ENCODE measurements at regions of chr3 and their contacts with region 1.

Region 1: DNA sequence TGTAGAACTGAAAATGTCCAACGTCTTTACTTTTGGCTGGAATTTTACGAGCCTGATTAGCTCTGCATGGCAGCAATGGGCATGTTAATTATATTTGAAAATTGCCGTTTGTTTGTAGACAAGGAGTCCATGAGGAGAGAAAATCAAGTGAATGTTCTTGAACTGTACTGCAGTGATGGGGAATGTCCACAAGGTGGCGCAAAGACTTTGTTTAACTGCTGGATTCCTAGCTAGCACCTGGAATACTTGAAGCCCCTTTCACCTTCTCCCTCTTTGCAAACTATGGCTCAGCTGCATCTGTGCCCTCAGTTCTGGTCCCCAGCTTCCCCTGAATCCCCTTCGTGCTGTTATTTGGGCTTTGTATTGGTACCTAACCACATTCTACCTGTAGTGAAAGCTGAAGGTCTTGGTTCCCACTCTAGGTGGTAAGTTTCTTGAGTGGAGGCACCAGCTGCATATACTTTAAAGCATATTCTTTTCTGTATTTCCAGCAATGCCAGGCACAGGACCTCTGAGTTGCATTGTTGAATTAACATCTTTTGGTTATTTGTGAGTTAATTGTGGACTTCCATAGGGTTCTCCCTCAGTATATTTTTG is 25.3 kb downstream of the EXOG start:
- DNase-seq: peak; percentile 75 to 84 (median 79)
- H3K4me3 ChIP-seq: no peak overlapping the region
- H3K27ac ChIP-seq: no peak overlapping the region
- H3K4me1 ChIP-seq: peaks cover 0 to 15% (median 1%) of the 10 kb centered on the region in 4 experiments
- H3K27me3 ChIP-seq: no peaks in the 10 kb centered on the region

Region 2: GRCh38 chr3:38383156-38383875 is 138.2 kb before region 1 on chr3:
- CTCF ChIA-PET with region 1: no interaction called
- POLR2A ChIA-PET with region 1: no interaction called
- DNase-seq: no peak
- H3K4me3 ChIP-seq: no peak overlapping the region
- H3K27ac ChIP-seq: no peak overlapping the region
- H3K4me1 ChIP-seq: no peaks in the 10 kb centered on the region
- H3K27me3 ChIP-seq: no peaks in the 10 kb centered on the region

Region 3: GRCh38 chr3:38453075-38453912 is 68.2 kb before region 1 on chr3 and contains the start of gene ACVR2B:
- CTCF ChIA-PET with region 1: no interaction called
- POLR2A ChIA-PET with region 1: no interaction called
- DNase-seq: peak; percentile 61 to 70 (median 69)
- H3K4me3 ChIP-seq: peak within 1 kb of the TSS; percentile 40 to 93 (median 77)
- H3K27ac ChIP-seq: peak within 1 kb of the TSS in 1 of 2 experiments; percentile 49
- H3K4me1 ChIP-seq: peaks cover 6 to 28% (median 22%) of the 10 kb centered on the region in 4 experiments
- H3K27me3 ChIP-seq: peaks cover 0 to 28% (median 6%) of the 10 kb centered on the region in 5 experiments

Region 4: GRCh38 chr3:38507120-38507519 is 14.4 kb before region 1 on chr3:
- CTCF ChIA-PET with region 1: interaction called, 16 read pairs
- POLR2A ChIA-PET with region 1: no interaction called
- DNase-seq: no peak
- H3K4me3 ChIP-seq: no peak overlapping the region
- H3K27ac ChIP-seq: no peak overlapping the region
- H3K4me1 ChIP-seq: no peaks in the 10 kb centered on the region
- H3K27me3 ChIP-seq: no peaks in the 10 kb centered on the region

Region 5: DNA sequence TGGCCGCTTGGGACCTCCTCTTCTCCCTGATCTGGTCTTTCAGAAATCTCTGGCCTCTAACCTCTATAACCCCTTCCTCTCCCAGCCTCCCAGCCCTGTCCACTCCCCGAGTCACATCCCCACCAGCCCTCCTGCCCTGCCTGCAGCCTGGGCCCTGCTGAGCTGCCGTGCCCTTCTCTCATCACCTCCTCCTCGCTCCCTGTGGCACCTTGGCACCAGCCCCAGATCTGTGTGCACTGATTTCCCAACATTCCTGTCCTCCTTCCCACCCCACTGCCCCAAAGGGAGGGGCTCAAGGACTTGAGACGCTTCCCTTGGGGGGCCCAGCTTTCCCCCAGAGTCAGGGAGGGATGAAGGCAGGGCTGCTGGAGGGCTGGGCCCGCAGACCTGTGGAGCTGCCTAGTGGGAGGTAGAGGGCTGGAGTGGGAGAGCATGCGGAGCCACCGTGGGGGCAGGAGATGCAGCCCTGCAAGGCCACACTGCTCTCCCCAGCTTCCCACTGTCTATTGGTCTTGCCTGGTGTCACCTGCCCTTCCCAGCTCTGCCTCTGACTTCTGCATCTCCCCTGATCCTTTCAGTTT is 17.4 kb after region 1 on chr3:
- CTCF ChIA-PET with region 1: interaction called, 12 read pairs
- POLR2A ChIA-PET with region 1: no interaction called
- DNase-seq: no peak
- H3K4me3 ChIP-seq: no peak overlapping the region
- H3K27ac ChIP-seq: no peak overlapping the region
- H3K4me1 ChIP-seq: no peaks in the 10 kb centered on the region
- H3K27me3 ChIP-seq: no peaks in the 10 kb centered on the region

Region 6: DNA sequence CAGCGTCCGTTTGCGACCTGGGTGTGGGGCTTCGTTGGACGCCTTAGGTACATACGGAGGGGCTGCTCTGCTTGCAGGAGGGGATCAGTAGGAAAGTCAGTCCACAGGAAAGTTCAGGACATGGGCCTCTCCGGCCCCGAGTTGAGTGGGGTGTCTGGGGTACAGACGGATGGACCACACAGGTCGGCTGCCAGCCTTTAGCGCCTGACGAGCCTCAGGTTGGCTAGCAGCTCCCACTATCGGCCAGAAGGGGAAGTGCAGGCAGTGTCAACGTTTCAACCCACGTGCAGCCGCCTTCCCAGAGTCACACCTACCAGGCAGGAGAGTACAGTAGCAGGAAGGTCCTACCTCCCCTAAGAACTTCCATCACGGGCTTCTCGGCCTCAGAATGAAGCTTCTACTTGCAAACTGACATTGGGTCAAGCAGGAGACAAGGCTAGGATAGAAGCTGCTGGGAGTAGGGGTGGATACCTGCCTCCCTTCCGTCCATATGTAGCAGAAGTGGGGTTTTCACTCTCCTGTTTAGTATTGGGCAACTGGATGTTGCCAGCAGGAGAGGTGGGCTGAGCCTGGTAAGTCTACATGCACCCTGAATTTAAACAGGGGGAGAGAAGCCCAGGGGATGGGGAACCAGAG is 129.8 kb after region 1 on chr3:
- CTCF ChIA-PET with region 1: interaction called, 42 read pairs
- POLR2A ChIA-PET with region 1: no interaction called
- DNase-seq: peak; percentile 63 to 78 (median 75)
- H3K4me3 ChIP-seq: peak overlapping the region in 2 of 7 experiments; percentile 25 to 54
- H3K27ac ChIP-seq: no peak overlapping the region
- H3K4me1 ChIP-seq: peaks cover 0 to 19% (median 16%) of the 10 kb centered on the region in 4 experiments
- H3K27me3 ChIP-seq: peaks cover 4 to 51% (median 35%) of the 10 kb centered on the region in 5 experiments

Region 7: GRCh38 chr3:38725726-38726419 is 204.4 kb after region 1 on chr3:
- CTCF ChIA-PET with region 1: no interaction called
- POLR2A ChIA-PET with region 1: no interaction called
- DNase-seq: peak in 1 of 3 donors; percentile 26
- H3K4me3 ChIP-seq: no peak overlapping the region
- H3K27ac ChIP-seq: no peak overlapping the region
- H3K4me1 ChIP-seq: peaks cover 0 to 30% (median 18%) of the 10 kb centered on the region in 4 experiments
- H3K27me3 ChIP-seq: no peaks in the 10 kb centered on the region

Region 8: GRCh38 chr3:38843898-38844297 is 322.4 kb after region 1 on chr3:
- CTCF ChIA-PET with region 1: interaction called, 52 read pairs
- POLR2A ChIA-PET with region 1: no interaction called
- DNase-seq: peak; percentile 52 to 75 (median 69)
- H3K4me3 ChIP-seq: no peak overlapping the region
- H3K27ac ChIP-seq: no peak overlapping the region
- H3K4me1 ChIP-seq: no peaks in the 10 kb centered on the region
- H3K27me3 ChIP-seq: peaks cover 0 to 2% (median 0%) of the 10 kb centered on the region in 5 experiments

Measured in common myeloid progenitor, CD34-positive (primary cell).